Keratinocyte (primary cell): ENCODE measurements at regions of chr3 and their contacts with region 1.

Region 1: GRCh38 chr3:170419557-170420087 is 954 bp downstream of the CLDN11 start:
- DNase-seq: no peak
- H3K4me3 ChIP-seq: peak overlapping the region in 1 of 3 experiments; percentile 55
- H3K27ac ChIP-seq: no peak overlapping the region
- H3K4me1 ChIP-seq: peaks cover 2% of the 10 kb centered on the region
- H3K27me3 ChIP-seq: peaks cover 24% of the 10 kb centered on the region
- CTCF ChIP-seq: no peak

Region 2: DNA sequence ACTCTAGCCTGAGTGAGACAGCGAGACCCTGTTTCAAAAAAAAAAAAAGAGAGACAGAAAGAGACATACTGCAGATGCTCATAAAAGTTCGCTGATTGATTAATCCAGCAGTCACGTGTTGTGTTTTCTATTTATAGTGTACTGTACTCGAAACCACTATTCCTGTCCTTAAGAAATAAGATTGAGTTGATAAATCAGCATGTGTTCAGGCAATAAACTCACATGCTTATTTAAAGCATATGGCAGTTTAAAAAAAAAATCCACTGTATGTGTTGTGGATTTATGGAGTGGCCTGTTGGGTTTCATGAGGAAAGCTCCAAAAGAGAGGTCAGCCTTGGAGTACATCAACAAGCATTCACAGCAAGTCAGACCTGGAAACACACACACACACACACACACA is 432.7 kb after region 1 on chr3:
- dilution Hi-C with region 1: loop called (anchors 10 kb)
- DNase-seq: no peak
- H3K4me3 ChIP-seq: no peak overlapping the region
- H3K27ac ChIP-seq: no peak overlapping the region
- H3K4me1 ChIP-seq: no peaks in the 10 kb centered on the region
- H3K27me3 ChIP-seq: no peaks in the 10 kb centered on the region
- CTCF ChIP-seq: no peak